A673 (cell line): ENCODE measurements at regions of chr6 and their contacts with region 1.

Region 1: GRCh38 chr6:36286858-36287257 is 17.0 kb downstream of the PNPLA1 start:
- DNase-seq: no peak
- H3K4me3 ChIP-seq: no peak overlapping the region
- H3K27ac ChIP-seq: no peak overlapping the region
- H3K4me1 ChIP-seq: no peaks in the 10 kb centered on the region
- H3K27me3 ChIP-seq: peaks cover 34% of the 10 kb centered on the region
- CTCF ChIP-seq: no peak

Region 2: GRCh38 chr6:35663447-35664235 is 623.2 kb before region 1 on chr6:
- CTCF ChIA-PET with region 1: no interaction called
- POLR2A ChIA-PET with region 1: no interaction called
- intact Hi-C with region 1: no loop called
- DNase-seq: peak; percentile 88
- H3K4me3 ChIP-seq: no peak overlapping the region
- H3K27ac ChIP-seq: peak overlapping the region; percentile 64
- H3K4me1 ChIP-seq: peaks cover 35% of the 10 kb centered on the region
- H3K27me3 ChIP-seq: no peaks in the 10 kb centered on the region
- CTCF ChIP-seq: no peak

Region 3: DNA sequence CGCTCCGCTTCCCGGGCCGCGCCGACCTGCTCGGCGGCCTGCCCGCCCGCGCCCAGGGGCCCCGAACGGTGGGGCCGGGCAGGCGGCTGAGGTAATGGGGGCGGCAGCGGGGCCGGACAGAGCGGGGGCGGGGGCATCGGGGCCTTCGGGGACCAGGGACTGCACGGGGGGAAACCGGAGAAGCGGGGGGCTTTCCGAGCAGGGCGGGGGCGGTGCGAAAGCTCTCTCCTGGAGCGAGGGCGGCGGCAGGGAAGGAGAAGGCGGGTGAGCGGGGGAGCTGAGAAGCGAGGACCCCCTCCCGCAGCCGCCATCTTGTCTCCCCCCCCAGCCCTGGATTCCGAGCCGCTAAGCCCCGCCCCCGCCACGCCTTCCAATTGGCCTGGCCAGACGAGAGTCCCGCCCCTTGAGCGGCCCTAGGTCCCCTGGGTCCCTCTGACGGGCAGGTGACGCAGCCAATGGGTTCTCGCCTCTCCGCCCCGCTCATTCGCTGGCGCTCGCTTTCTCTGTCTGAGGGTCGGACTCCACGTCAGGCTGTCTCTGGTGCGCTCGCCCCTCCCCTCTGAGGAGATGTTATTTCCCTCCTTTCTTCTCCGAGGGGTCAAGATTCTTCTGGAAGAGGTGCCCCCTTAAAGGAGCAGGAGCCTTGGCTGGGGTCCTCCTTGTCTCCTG is 89.8 kb before region 1 on chr6:
- CTCF ChIA-PET with region 1: no interaction called
- POLR2A ChIA-PET with region 1: interaction called, 12 read pairs
- intact Hi-C with region 1: no loop called
- DNase-seq: peak; percentile 98
- H3K4me3 ChIP-seq: peak overlapping the region; percentile 70
- H3K27ac ChIP-seq: peak overlapping the region; percentile 96
- H3K4me1 ChIP-seq: peaks cover 8% of the 10 kb centered on the region
- H3K27me3 ChIP-seq: no peaks in the 10 kb centered on the region
- CTCF ChIP-seq: no peak